Aorta (tissue), 5 donors: ENCODE measurements at regions of chr1 and their contacts with region 1.

Region 1: DNA sequence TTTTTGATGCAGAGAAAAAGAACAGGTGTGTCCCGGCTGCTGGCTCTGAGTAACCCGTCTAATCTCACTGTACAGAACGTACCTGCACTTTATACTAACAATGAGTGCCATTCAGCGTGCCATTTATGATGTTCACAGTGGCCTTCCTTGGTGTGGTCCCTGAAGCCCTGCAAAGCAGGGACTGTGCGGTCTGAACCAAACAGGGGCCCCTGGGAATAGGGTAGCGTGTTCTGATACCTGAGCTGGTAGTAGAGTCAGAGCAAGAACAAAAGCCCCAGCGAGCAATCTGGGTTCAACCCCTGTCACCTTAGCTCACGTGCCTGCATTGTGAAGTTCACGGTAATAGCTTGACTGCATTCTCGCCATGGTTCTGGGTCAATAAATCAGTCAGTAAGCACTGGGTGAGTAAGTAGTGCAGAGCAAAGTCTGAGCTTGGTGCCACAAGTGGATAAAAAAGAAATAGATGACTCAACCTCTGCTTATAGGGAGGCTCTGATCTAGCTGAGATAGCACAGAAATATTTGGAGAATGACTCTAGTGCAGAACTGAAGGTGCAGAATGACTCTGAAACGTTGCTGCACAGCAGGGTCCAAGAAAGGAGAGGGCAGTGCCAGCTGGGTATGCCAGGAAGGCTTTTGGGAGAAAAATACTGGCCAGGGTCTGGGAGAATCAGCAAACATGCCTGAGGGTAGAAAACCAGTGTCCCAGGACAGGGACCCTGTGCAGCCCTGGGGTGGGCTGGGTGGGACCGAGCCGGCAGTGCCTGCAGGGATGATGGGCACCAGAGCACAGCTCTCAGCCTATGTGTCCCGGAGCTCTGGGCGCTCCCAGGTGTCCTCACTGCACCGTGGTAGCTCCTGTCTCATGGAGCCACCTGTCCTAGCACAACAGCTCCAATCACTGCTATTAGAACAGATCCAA is 125.9 kb downstream of the RHOU start:
- DNase-seq: no peak
- ATAC-seq: peak; percentile 63
- H3K4me3 ChIP-seq: no peak overlapping the region
- H3K27ac ChIP-seq: no peak overlapping the region
- H3K4me1 ChIP-seq: peaks cover 0 to 1% of the 10 kb centered on the region in 2 donors
- H3K27me3 ChIP-seq: no peaks in the 10 kb centered on the region

Region 2: DNA sequence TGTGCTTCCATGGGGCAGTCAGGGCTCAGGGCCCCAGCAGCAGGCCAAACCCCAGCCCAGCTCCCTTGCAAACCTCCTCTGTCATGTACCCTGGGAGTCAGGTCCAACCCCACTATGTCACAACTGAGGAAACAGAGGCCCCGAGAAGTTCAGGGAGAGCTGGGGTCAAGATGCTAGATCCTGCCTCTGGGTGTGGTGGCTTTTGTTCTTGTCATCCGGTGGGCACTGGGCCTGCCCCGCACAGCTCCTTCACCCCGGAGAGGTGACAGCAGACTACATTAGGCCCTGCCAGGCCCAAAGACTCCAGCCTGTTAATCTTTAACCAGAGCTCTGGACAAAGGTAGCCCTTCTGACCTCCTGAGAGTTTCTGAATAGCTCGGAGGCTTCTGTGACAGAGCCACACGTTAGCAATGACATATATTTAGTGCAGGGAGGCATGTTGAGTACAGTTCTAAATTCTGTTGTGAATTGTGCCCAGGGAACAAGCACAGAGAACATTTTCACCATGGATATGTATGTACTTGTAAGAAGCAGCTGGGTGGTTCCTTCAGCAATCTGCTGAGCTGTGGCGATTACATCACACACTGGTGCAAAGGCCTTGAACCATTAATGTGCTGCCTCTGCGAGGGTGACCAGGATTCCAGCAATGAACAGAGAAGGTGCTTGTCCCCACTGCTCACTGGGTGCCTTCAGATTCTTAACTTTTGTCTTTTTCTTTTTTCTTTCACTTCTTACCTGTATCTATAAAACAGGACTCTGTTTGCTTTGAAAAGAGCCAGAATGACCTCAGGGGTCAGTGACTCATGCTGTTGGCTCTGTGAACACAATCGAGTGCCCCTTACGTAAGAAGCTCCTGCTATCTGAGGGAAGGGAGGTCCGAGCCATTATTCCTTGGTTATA is 23.1 kb before region 1 on chr1:
- intact Hi-C with region 1: loop called in 1 of 2 experiments (anchors 2 kb)
- DNase-seq: peak in 1 of 2 donors; percentile 63
- ATAC-seq: peak; percentile 81
- H3K4me3 ChIP-seq: no peak overlapping the region
- H3K27ac ChIP-seq: no peak overlapping the region
- H3K4me1 ChIP-seq: peaks cover 0 to 2% of the 10 kb centered on the region in 2 donors
- H3K27me3 ChIP-seq: no peaks in the 10 kb centered on the region

Region 3: GRCh38 chr1:229893762-229894444 is 1032.7 kb after region 1 on chr1:
- intact Hi-C with region 1: no loop called
- DNase-seq: no peak
- ATAC-seq: no peak
- H3K4me3 ChIP-seq: no peak overlapping the region
- H3K27ac ChIP-seq: no peak overlapping the region
- H3K4me1 ChIP-seq: no peaks in the 10 kb centered on the region
- H3K27me3 ChIP-seq: no peaks in the 10 kb centered on the region